Vagina (tissue), 2 donors: ENCODE measurements at regions of chr13 and their contacts with region 1.

Region 1: GRCh38 chr13:77124423-77124822 is 97.5 kb upstream of the FBXL3 start:
- DNase-seq: no peak
- H3K4me3 ChIP-seq: no peak overlapping the region
- H3K27ac ChIP-seq: no peak overlapping the region
- H3K4me1 ChIP-seq: no peaks in the 10 kb centered on the region
- H3K27me3 ChIP-seq: no peaks in the 10 kb centered on the region
- CTCF ChIP-seq: no peak
- POLR2A ChIP-seq: no peak

Region 2: GRCh38 chr13:75357576-75358289 is 1766.7 kb before region 1 on chr13:
- intact Hi-C with region 1: no loop called
- DNase-seq: no peak
- H3K4me3 ChIP-seq: no peak overlapping the region
- H3K27ac ChIP-seq: no peak overlapping the region
- H3K4me1 ChIP-seq: no peaks in the 10 kb centered on the region
- H3K27me3 ChIP-seq: no peaks in the 10 kb centered on the region
- CTCF ChIP-seq: no peak
- POLR2A ChIP-seq: no peak

Region 3: DNA sequence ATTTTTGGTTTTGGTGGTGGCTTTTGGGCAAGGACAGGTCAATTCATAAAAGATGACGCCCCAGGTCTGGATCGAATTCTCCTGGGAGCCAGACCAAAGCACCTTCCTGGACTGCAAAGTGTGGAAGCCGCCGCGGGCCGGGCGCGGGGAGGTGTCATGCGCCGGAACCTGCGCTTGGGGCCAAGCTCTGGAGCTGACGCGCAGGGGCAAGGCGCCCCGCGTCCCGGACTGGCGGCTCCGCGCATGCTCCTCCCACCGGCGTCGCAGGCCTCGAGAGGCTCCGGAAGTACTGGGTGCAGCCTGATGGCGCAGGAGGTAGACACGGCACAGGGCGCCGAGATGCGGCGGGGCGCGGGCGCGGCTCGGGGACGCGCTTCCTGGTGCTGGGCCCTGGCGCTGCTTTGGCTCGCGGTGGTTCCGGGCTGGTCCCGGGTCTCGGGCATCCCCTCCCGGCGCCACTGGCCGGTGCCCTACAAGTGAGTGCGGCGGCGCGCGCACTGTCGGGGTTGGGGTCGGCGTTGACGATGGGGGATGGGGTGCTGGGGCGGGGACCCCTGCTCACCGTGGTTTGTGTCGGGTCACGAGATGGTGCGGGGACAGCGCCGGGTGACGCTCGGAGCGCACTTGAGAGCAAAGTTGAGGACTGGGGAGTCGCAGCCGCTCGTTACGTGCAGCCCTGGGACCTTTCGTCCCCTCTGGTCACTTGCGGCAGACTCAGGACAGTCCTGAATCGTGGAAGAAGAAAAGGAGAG is 132.5 kb before region 1 on chr13 and contains the start of gene CLN5:
- intact Hi-C with region 1: no loop called
- DNase-seq: peak in 1 of 2 donors; percentile 96
- H3K4me3 ChIP-seq: peak within 1 kb of the TSS; percentile 73 to 74
- H3K27ac ChIP-seq: peak within 1 kb of the TSS; percentile 88
- H3K4me1 ChIP-seq: peaks cover 24% of the 10 kb centered on the region
- H3K27me3 ChIP-seq: no peaks in the 10 kb centered on the region
- CTCF ChIP-seq: peak in 1 of 3 experiments; percentile 22
- POLR2A ChIP-seq: peak; percentile 10 to 94
- total RNA-seq, gene CLN5: 15.0 TPM

Region 4: GRCh38 chr13:77079902-77080413 is 44.5 kb before region 1 on chr13:
- intact Hi-C with region 1: loop called (anchors 1 kb)
- DNase-seq: no peak
- H3K4me3 ChIP-seq: no peak overlapping the region
- H3K27ac ChIP-seq: no peak overlapping the region
- H3K4me1 ChIP-seq: no peaks in the 10 kb centered on the region
- H3K27me3 ChIP-seq: no peaks in the 10 kb centered on the region
- CTCF ChIP-seq: no peak
- POLR2A ChIP-seq: no peak